ENCODE measurements at regions of chr14 and their contacts with region 1.

Region 1: DNA sequence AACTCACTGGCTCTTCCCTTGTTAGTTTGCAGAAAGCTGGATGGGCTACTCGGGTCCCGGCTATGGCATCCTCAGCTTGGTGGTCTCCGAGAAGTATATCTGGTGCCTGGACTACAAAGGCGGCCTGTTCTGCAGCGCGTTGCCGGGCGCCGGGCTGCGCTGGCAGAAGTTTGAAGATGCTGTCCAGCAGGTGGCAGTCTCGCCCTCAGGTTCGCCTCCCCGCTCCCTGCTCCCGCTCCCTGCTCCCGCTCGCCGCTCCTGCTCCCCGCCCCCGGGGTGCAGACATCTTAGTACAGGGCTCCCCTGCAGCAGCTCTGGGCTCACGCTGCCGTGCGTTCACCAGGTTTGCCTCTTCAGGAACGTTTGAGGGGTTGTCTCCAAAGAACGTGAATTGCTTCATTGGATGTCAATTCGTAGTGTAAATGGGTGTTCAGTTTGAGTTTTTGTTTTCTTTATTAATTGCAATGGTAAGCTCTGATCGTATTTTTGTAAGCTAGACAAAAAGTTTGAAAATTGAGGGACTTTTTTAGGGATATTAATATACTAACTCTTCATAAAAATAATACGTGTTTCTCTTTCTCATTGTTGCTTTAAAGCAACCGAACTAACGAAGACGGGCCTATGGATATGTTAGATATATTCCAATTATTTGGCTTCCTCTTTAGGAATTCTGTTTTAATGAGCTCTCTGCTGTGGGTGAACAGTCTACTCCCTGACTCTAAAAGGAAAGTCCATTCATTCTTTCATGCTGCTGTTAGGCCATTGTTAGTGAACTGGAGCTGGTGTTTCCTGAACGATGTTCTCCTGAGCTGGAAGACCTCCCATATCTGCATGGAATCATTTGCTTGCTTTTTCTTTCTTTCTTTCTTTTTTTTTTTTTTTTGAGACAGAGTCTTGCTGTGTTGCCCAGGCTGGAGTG is 71.3 kb downstream of the ANKRD9 start:
- DNase-seq: peak; percentile 85
- CTCF ChIP-seq: peak; percentile 78

Region 2: GRCh38 chr14:102323102-102323501 is 115.2 kb before region 1 on chr14:
- CTCF ChIA-PET with region 1: no interaction called
- POLR2A ChIA-PET with region 1: no interaction called
- DNase-seq: no peak
- CTCF ChIP-seq: peak; percentile 35

Region 3: DNA sequence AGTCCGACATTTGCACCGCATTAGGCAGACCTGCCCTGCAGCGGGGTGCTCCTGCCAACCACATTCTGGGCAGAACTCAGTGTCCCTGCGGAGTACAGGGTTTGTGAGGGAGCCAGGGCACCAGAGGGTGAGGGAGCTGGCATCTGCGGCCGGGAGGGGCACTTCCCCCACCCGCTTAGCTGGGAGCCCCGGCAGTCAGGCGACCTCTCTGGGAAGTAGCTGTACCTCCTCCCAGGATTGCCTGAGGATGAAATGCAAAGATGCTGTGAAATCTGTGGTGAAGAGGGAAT is 12.8 kb after region 1 on chr14:
- CTCF ChIA-PET with region 1: interaction called, 39 read pairs
- POLR2A ChIA-PET with region 1: no interaction called
- DNase-seq: no peak
- CTCF ChIP-seq: no peak

Region 4: DNA sequence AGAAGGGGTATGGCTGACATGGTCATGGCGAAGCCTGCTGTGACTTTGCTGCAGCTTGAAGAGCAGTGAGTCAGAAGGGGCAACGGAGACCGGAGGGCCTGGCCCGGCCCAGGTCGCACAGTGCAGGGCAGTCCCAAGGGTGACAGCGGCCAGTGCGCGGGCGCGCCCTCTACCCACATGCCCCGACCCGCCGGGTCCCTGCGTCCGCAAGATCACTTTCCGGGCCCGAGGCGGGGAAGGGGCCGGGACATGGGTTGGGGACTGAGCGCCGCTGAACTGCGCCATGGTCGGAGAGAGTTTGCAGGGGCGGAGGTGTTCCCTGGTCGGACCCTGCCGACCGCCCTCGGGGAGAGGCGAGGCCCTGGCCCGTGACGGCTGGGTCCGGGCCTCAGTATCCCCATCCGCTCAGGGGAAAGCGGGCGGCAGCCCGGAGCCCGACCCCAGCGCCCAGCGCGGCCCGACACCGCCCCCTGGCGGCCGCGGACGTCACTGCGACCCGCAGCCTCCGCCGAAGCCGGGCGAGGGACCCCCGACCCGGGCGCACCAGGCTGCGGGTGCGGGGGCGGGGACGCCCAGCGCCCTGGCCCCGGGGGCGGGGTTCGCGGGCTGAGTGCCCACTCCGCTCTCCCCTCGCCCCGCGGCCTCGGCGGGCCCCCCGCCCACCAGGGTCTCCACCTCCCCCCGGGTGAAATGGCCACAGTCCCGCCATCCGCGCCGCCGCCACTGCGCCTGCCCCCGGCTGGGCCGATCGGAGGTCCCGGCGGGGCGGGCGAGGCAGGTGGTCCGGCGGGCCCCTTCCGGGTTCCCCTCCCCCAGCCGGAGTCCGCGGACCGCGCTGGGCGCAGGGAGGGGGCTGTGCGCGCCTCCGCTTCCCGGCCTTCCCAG is 78.5 kb after region 1 on chr14:
- CTCF ChIA-PET with region 1: interaction called, 30 read pairs
- POLR2A ChIA-PET with region 1: no interaction called
- DNase-seq: peak; percentile 84
- CTCF ChIP-seq: peak; percentile 83

Region 5: GRCh38 chr14:102524466-102525218 is 86.4 kb after region 1 on chr14:
- CTCF ChIA-PET with region 1: interaction called, 30 read pairs
- POLR2A ChIA-PET with region 1: no interaction called
- DNase-seq: peak; percentile 99
- CTCF ChIP-seq: peak; percentile 98

Region 6: DNA sequence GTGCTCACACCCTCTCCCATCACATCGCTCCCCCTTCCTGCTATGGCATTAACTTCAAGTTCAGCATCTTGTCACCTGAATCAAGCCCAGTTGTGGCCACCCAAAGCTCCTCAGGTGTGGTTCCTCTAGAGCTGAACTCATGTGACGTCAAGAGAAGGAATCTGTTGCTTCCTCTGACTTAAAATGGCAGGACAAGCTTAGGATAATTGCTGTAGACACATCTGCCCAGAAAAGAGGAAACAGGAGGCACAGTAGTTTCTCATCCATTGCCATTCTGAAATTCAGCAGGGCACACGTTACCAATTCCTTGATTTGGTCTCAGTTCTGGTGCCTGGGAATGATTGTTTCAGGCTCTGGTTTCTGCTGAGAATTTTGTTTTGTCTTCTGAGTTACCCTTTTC is 206.3 kb after region 1 on chr14:
- CTCF ChIA-PET with region 1: no interaction called
- POLR2A ChIA-PET with region 1: no interaction called
- DNase-seq: no peak
- CTCF ChIP-seq: no peak